Endothelial cell of umbilical vein (primary cell): ENCODE measurements at regions of chr2 and their contacts with region 1.

Region 1: DNA sequence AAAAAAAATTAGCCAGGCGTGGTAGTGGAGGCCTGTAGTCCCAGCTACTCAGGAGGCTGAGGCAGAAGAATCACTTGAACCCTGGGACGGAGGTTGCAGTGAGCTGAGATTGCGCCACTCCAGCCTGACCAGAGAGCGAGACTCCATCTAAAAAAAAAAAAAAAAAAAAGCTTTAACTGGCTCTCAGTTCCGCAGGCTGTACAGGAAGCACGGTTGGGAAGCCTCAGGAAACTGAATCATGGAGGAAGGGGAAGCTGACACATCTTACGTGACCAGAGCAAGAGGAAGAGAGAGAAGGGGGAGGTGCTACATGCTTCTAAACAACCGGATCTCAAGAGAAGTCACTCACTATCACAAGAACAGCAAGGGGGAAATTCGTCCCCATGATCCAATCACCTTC is 505.6 kb upstream of the SLC8A1 start:
- DNase-seq: peak; percentile 84
- H3K4me3 ChIP-seq: no peak overlapping the region
- H3K27ac ChIP-seq: peak overlapping the region; percentile 75
- H3K4me1 ChIP-seq: peaks cover 23% of the 10 kb centered on the region
- H3K27me3 ChIP-seq: no peaks in the 10 kb centered on the region
- CTCF ChIP-seq: no peak
- POLR2A ChIP-seq: peak; percentile 45

Region 2: GRCh38 chr2:40783704-40784103 is 173.8 kb before region 1 on chr2:
- CTCF ChIA-PET with region 1: no interaction called
- POLR2A ChIA-PET with region 1: no interaction called
- dilution Hi-C with region 1: no loop called
- intact Hi-C with region 1: loop called (anchors 10 kb)
- DNase-seq: no peak
- H3K4me3 ChIP-seq: no peak overlapping the region
- H3K27ac ChIP-seq: no peak overlapping the region
- H3K4me1 ChIP-seq: peaks cover 10% of the 10 kb centered on the region
- H3K27me3 ChIP-seq: no peaks in the 10 kb centered on the region
- CTCF ChIP-seq: no peak
- POLR2A ChIP-seq: no peak

Region 3: DNA sequence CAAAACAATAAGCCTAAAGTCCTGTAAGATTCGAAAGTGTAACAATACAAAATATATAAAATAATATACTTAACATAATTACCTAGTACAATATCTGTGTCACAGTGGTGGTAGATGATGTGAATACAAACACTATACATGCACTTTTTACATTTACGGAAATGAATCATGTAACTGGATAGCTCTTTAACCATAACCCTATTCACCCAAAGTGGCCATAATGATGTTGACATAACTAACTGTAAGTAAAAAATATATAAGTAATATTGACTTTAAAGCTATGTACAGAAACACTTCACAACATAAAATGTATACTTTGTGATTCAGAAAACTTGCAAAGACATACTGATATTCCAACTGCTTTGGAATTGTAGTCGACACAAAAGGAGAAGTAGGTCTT is 111.2 kb after region 1 on chr2:
- CTCF ChIA-PET with region 1: no interaction called
- POLR2A ChIA-PET with region 1: no interaction called
- dilution Hi-C with region 1: no loop called
- intact Hi-C with region 1: loop called (anchors 5 kb)
- DNase-seq: no peak
- H3K4me3 ChIP-seq: no peak overlapping the region
- H3K27ac ChIP-seq: no peak overlapping the region
- H3K4me1 ChIP-seq: peaks cover 17% of the 10 kb centered on the region
- H3K27me3 ChIP-seq: no peaks in the 10 kb centered on the region
- CTCF ChIP-seq: no peak
- POLR2A ChIP-seq: no peak

Region 4: GRCh38 chr2:41160439-41160838 is 202.9 kb after region 1 on chr2:
- CTCF ChIA-PET with region 1: no interaction called
- POLR2A ChIA-PET with region 1: no interaction called
- dilution Hi-C with region 1: no loop called
- intact Hi-C with region 1: loop called (anchors 2 kb)
- DNase-seq: peak; percentile 75
- H3K4me3 ChIP-seq: no peak overlapping the region
- H3K27ac ChIP-seq: no peak overlapping the region
- H3K4me1 ChIP-seq: peaks cover 29% of the 10 kb centered on the region
- H3K27me3 ChIP-seq: no peaks in the 10 kb centered on the region
- CTCF ChIP-seq: no peak
- POLR2A ChIP-seq: no peak

Region 5: GRCh38 chr2:41314511-41315070 is 357.1 kb after region 1 on chr2:
- CTCF ChIA-PET with region 1: no interaction called
- POLR2A ChIA-PET with region 1: no interaction called
- dilution Hi-C with region 1: no loop called
- intact Hi-C with region 1: loop called (anchors 10 kb)
- DNase-seq: no peak
- H3K4me3 ChIP-seq: no peak overlapping the region
- H3K27ac ChIP-seq: no peak overlapping the region
- H3K4me1 ChIP-seq: peaks cover 2% of the 10 kb centered on the region
- H3K27me3 ChIP-seq: no peaks in the 10 kb centered on the region
- CTCF ChIP-seq: no peak
- POLR2A ChIP-seq: no peak